ENCODE measurements at regions of chr1 and their contacts with region 1.

Region 1: GRCh38 chr1:113140588-113141446 is 67.8 kb downstream of the LRIG2 start:
- DNase-seq: peak; percentile 50 to 60
- H3K4me3 ChIP-seq: no peak overlapping the region
- H3K27ac ChIP-seq: peak overlapping the region in 1 of 2 donors; percentile 43
- H3K4me1 ChIP-seq: no peaks in the 10 kb centered on the region
- H3K27me3 ChIP-seq: no peaks in the 10 kb centered on the region
- CTCF ChIP-seq: peak; percentile 63 to 81 (median 77)
- POLR2A ChIP-seq: no peak

Region 2: GRCh38 chr1:113677250-113678158 is 536.7 kb after region 1 on chr1:
- intact Hi-C with region 1: loop called (anchors 10 kb)
- DNase-seq: no peak
- H3K4me3 ChIP-seq: no peak overlapping the region
- H3K27ac ChIP-seq: no peak overlapping the region
- H3K4me1 ChIP-seq: no peaks in the 10 kb centered on the region
- H3K27me3 ChIP-seq: no peaks in the 10 kb centered on the region
- CTCF ChIP-seq: peak; percentile 50 to 66 (median 58)
- POLR2A ChIP-seq: no peak